Gastrocnemius medialis (tissue), 4 donors: ENCODE measurements at regions of chr13 and their contacts with region 1.

Region 1: DNA sequence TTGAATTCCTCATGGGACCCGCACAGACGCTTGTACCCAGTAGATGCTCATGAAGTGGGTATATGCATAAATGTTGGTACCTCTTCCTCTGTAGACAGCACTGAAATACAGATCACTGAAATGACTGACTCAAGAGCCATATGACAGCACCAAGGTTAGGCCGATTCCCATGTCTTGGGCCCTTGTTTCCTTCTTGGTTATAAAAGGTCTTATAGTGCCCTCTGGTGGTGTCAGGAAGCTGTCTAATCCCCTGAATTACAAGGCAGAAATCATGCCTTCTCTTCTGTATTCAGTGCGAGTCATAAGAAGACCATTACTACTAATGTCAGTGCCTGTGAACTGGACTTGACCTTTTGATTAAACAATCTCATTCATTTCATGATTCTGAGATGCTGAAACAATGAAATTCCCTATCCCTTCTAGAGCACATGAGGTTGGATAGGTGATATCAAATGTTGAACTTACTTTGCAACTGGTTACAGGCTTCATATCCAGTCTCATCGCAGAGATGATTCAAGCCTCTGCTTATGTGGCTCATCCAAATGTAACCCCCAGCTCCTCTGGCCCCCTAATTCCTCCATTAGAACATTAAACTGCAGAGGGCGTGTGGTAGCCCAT is 59.7 kb downstream of the SPATA13 start:
- DNase-seq: no peak
- ATAC-seq: peak; percentile 56 to 85
- H3K4me3 ChIP-seq: no peak overlapping the region
- H3K27ac ChIP-seq: no peak overlapping the region
- H3K4me1 ChIP-seq: peaks cover 0 to 13% of the 10 kb centered on the region in 2 donors
- H3K27me3 ChIP-seq: no peaks in the 10 kb centered on the region
- CTCF ChIP-seq: peak; percentile 57 to 72 (median 60)
- POLR2A ChIP-seq: no peak

Region 2: GRCh38 chr13:23921451-23921888 is 298.7 kb before region 1 on chr13:
- in situ Hi-C with region 1: loop called in 2 of 4 experiments (anchors 25 kb)
- intact Hi-C with region 1: loop called (anchors 1 kb)
- DNase-seq: no peak
- ATAC-seq: peak in 1 of 2 donors; percentile 44
- H3K4me3 ChIP-seq: no peak overlapping the region
- H3K27ac ChIP-seq: no peak overlapping the region
- H3K4me1 ChIP-seq: no peaks in the 10 kb centered on the region
- H3K27me3 ChIP-seq: no peaks in the 10 kb centered on the region
- CTCF ChIP-seq: peak; percentile 42 to 64 (median 58)
- POLR2A ChIP-seq: no peak

Region 3: GRCh38 chr13:24012648-24013047 is 207.5 kb before region 1 on chr13:
- in situ Hi-C with region 1: loop called in 2 of 4 experiments (anchors 10 kb)
- intact Hi-C with region 1: no loop called
- DNase-seq: no peak
- ATAC-seq: no peak
- H3K4me3 ChIP-seq: no peak overlapping the region
- H3K27ac ChIP-seq: no peak overlapping the region
- H3K4me1 ChIP-seq: no peaks in the 10 kb centered on the region
- H3K27me3 ChIP-seq: no peaks in the 10 kb centered on the region
- CTCF ChIP-seq: no peak
- POLR2A ChIP-seq: no peak

Region 4: GRCh38 chr13:24020375-24020830 is 199.8 kb before region 1 on chr13:
- in situ Hi-C with region 1: loop called (anchors 5 to 10 kb)
- intact Hi-C with region 1: loop called (anchors 1 kb)
- DNase-seq: no peak
- ATAC-seq: no peak
- H3K4me3 ChIP-seq: no peak overlapping the region
- H3K27ac ChIP-seq: no peak overlapping the region
- H3K4me1 ChIP-seq: no peaks in the 10 kb centered on the region
- H3K27me3 ChIP-seq: no peaks in the 10 kb centered on the region
- CTCF ChIP-seq: peak; percentile 17 to 53 (median 43)
- POLR2A ChIP-seq: no peak

Region 5: GRCh38 chr13:24053519-24054251 is 166.5 kb before region 1 on chr13:
- in situ Hi-C with region 1: loop called in 1 of 4 experiments (anchors 10 kb)
- intact Hi-C with region 1: loop called (anchors 1 kb)
- DNase-seq: no peak
- ATAC-seq: peak in 1 of 2 donors; percentile 32
- H3K4me3 ChIP-seq: no peak overlapping the region
- H3K27ac ChIP-seq: peak overlapping the region in 2 of 4 donors; percentile 48 to 57
- H3K4me1 ChIP-seq: peaks cover 3 to 13% of the 10 kb centered on the region in 2 donors
- H3K27me3 ChIP-seq: no peaks in the 10 kb centered on the region
- CTCF ChIP-seq: peak; percentile 32 to 54 (median 50)
- POLR2A ChIP-seq: no peak

Region 6: DNA sequence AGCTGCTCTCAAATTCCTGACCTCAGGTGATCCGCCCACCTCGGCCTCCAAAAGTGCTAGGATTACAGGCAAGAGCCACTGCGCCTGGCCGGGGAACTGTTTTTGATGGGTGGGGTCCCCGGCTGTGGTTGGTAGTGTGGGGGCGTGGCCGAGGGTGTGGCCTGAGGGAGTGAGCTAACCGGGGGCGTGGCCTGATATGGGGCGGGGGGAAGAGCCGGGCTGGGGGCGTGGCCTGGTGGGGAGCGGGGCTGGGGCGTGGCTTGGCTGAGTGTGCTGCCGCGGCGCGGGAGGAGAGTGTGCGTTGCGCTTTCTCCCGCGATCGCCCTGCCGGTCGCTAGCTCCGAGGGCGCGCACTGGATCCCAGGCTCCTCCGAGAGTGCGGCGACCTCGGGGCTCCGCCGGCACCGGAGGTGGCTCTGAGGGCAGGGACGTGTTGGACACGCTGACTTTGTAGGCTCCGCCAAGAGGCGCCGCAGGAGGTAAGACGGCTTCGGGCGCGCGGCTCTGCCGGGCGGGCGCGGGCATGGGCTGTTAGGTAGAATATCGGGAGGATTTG is 59.7 kb before region 1 on chr13 and contains the start of gene SPATA13:
- in situ Hi-C with region 1: no loop called
- intact Hi-C with region 1: loop called (anchors 5 kb)
- DNase-seq: peak; percentile 72 to 76
- ATAC-seq: peak; percentile 68 to 89
- H3K4me3 ChIP-seq: peak within 1 kb of the TSS; percentile 54 to 82 (median 71)
- H3K27ac ChIP-seq: peak within 1 kb of the TSS; percentile 58 to 72 (median 70)
- H3K4me1 ChIP-seq: peaks cover 6 to 20% of the 10 kb centered on the region in 2 donors
- H3K27me3 ChIP-seq: peaks cover 0 to 21% (median 19%) of the 10 kb centered on the region in 3 donors
- CTCF ChIP-seq: no peak
- POLR2A ChIP-seq: peak; percentile 43 to 56
- total RNA-seq, gene SPATA13: 3.2 to 17.0 (median 5.8) TPM

Region 7: DNA sequence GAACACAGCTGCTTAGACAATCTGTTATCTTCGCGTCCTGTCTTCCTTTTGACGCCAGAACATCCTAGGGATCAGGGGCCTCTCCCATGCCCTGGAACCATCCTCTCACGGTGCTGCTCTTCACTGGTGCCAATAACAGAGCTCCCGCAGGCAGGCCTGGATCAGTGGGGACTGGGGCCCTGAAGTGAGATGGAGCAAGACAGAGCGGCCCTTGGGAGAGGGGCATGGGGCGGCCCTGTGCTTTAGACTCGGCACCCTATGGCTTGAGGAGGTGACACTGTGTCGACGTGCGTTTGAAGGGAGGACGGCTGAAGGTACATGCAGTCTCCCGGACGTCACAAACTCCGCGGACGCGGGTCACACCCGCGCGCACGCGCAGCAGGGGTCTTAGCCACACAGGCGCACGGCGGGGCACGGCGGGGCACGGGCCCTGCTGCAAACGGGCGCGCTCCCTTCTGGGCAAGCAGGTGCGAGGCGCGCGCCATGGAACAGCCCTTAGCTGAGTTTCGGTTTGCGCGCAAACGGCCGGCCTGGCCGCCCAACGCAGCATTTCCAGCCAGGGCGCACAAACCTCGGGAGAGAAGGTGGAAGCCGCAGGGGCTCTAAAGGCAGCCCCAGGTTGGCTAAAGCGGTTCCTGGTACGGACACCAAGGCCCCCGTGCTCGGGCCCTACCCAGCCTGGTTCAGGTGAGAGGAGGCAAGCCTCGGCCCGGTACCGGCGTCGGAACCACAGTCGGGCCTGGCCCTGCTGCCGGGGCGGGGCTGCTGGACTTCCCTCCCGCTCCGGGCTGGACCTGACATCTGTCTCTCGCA is 527.3 kb after region 1 on chr13:
- in situ Hi-C with region 1: no loop called
- intact Hi-C with region 1: no loop called
- DNase-seq: no peak
- ATAC-seq: no peak
- H3K4me3 ChIP-seq: peak overlapping the region; percentile 30 to 44 (median 39)
- H3K27ac ChIP-seq: no peak overlapping the region
- H3K4me1 ChIP-seq: peaks cover 0 to 7% of the 10 kb centered on the region in 2 donors
- H3K27me3 ChIP-seq: peaks cover 18 to 20% (median 20%) of the 10 kb centered on the region in 3 donors
- CTCF ChIP-seq: no peak
- POLR2A ChIP-seq: no peak